GM18951 (cell line): ENCODE measurements at regions of chr7 and their contacts with region 1.

Region 1: DNA sequence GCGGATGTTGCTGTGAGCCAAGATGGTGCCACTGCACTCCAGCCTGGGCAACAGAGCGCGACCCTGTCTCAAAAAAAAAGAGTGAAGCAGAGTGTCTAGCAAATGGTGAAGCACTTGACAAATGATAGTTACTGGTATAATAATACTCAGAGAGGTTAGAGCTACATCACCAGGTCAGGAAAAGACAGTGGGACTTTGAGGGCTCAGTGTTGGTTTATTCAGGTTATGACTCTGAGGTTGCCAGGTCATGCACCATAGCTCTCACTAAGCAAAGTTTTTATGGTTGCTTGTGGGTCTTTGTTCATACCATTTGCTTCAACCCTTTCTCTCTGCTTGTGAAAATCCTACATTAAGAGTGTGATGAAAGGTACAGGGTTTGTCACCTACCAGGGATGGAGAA is 13.6 kb downstream of the MRPS33 start:
- POLR2A ChIP-seq: no peak

Region 2: GRCh38 chr7:140810830-140811556 is 190.1 kb before region 1 on chr7:
- in situ Hi-C with region 1: loop called (anchors 10 kb)
- POLR2A ChIP-seq: no peak